Aorta (tissue), 5 donors: ENCODE measurements at regions of chr4 and their contacts with region 1.

Region 1: GRCh38 chr4:87679449-87680169 is 29.5 kb downstream of the DMP1 start:
- DNase-seq: peak; percentile 59 to 82
- ATAC-seq: no peak
- H3K4me3 ChIP-seq: no peak overlapping the region
- H3K27ac ChIP-seq: no peak overlapping the region
- H3K4me1 ChIP-seq: no peaks in the 10 kb centered on the region
- H3K27me3 ChIP-seq: no peaks in the 10 kb centered on the region

Region 2: GRCh38 chr4:87363567-87363966 is 316.0 kb before region 1 on chr4:
- intact Hi-C with region 1: no loop called
- DNase-seq: no peak
- ATAC-seq: no peak
- H3K4me3 ChIP-seq: no peak overlapping the region
- H3K27ac ChIP-seq: no peak overlapping the region
- H3K4me1 ChIP-seq: no peaks in the 10 kb centered on the region
- H3K27me3 ChIP-seq: no peaks in the 10 kb centered on the region

Region 3: DNA sequence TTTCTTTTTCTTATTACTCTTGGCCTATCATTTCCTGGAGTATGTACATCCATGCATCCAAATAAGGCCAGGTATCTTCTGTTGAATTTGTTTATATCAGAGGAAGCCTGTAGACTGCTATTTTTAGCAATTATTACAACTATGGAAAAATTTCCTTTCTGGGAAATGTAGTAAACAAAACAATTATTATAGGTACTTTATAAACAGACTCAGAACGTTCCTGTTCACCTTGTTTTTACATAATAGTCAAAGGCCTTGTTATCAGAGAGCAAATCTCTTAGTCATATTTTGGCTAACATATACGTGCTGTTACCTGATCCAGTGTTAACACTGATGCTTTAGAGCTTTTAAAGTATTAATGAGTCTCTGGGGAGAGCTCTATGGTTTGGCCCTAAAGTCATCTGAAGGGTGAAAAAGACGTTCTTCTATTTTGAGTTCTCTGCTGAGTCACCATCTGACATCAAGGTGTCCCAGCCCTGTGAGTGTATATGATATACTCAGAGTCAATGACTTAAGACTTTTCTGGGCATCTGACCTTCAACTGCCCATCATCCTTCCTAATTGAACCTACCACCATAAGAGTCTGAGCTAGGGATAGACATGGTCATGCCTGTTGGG is 157.7 kb before region 1 on chr4:
- intact Hi-C with region 1: no loop called
- DNase-seq: no peak
- ATAC-seq: peak; percentile 40
- H3K4me3 ChIP-seq: no peak overlapping the region
- H3K27ac ChIP-seq: peak overlapping the region; percentile 90 to 100
- H3K4me1 ChIP-seq: peaks cover 7 to 10% of the 10 kb centered on the region in 2 donors
- H3K27me3 ChIP-seq: no peaks in the 10 kb centered on the region

Region 4: GRCh38 chr4:87543835-87544461 is 135.7 kb before region 1 on chr4:
- intact Hi-C with region 1: loop called in 1 of 2 experiments (anchors 5 kb)
- DNase-seq: no peak
- ATAC-seq: peak; percentile 79
- H3K4me3 ChIP-seq: no peak overlapping the region
- H3K27ac ChIP-seq: no peak overlapping the region
- H3K4me1 ChIP-seq: peaks cover 0 to 4% of the 10 kb centered on the region in 2 donors
- H3K27me3 ChIP-seq: no peaks in the 10 kb centered on the region

Region 5: DNA sequence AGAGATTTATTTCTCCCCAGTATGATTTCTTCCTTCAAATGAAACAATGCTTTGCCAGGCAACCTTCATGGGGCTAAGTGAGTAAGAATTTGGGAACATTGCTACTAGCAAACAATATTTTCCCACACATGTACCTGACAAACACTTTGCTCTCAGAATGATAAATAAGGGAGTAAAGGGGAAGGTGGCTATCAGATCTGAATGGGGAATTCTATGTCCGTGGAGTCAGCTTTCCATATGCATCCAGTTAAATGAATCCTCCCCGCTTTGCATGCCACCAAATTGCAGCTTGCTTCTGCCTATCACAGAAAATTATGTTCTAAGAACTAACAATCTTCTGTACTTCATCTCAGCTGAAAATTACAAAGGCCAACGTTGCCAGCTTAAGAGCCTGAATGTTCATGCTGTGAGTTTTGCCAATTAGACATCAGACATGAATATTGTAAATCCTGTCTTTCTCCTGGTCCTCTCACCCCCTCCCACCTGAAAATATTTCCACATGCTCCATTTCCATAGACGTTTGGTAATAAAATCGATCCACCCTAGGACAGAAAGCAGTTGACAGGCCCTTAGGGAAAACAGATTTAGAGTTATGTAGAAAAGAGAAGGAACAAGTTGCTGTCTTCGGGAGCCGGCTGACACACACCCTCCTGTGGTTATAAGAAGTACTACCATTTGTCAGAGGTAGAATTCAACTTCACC is 159.4 kb after region 1 on chr4:
- intact Hi-C with region 1: loop called in 1 of 2 experiments (anchors 5 kb)
- DNase-seq: no peak
- ATAC-seq: no peak
- H3K4me3 ChIP-seq: no peak overlapping the region
- H3K27ac ChIP-seq: no peak overlapping the region
- H3K4me1 ChIP-seq: peaks cover 0 to 1% of the 10 kb centered on the region in 2 donors
- H3K27me3 ChIP-seq: no peaks in the 10 kb centered on the region

Region 6: DNA sequence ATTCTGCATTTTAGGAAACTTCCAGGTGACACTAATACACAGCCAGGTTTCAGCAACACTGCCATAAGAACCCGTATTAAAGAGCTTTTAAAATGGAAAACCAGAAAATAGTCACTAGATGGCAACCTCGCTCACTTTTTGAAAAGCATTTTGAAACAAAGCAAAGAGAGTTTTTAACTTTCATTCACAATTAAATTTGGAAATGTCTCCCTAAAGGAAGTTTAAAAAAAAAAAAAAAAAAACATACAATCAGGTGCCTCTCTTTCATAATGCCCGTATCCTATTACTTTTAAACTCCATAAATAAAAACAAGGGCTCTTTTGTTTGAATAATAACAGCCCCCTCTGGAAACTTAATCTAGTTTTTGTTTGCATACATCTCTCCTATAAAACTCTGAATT is 173.5 kb after region 1 on chr4:
- intact Hi-C with region 1: no loop called
- DNase-seq: no peak
- ATAC-seq: no peak
- H3K4me3 ChIP-seq: no peak overlapping the region
- H3K27ac ChIP-seq: no peak overlapping the region
- H3K4me1 ChIP-seq: no peaks in the 10 kb centered on the region
- H3K27me3 ChIP-seq: no peaks in the 10 kb centered on the region

Region 7: DNA sequence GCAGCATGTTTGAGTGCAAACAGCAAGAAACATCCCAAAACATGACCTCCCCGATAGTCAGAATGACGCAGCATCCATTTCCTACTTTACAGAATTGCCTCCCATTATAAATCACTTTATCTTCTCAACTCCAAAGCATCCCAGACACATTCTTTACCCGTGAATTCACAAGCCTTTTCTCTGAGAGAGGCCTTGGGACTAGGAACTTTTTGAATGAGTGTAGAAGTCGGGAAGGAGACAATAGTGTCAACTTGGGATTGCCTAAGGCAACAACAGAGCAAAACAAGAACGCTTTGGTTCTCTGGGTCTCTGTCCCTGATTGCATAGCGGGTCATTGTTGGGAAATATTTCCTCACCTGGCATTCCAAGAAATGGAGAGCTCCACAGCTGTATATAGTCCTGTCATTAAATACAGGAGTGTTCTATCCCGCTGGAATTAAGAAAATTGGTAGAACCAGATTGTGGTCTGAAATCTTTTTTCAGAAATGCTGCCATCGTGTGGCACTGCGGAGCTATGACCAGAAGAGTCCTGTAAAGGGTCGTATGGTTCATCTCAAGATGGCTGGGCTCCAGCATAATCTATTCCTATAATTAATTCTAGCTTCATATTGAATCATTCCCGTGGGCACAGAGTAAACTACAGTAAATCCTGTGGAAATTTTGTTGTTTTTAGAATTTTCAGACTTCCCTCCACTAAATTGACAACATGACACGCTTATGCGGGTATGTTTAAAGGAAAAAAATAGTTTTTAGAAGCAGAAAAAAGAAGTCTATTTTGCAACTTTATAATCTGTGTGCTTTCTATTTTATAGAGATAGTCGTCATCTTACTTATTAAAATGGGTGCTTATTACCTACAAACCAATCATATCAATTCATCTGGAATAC is 293.9 kb after region 1 on chr4:
- intact Hi-C with region 1: loop called (anchors 10 kb)
- DNase-seq: peak in 1 of 2 donors; percentile 65
- ATAC-seq: no peak
- H3K4me3 ChIP-seq: no peak overlapping the region
- H3K27ac ChIP-seq: no peak overlapping the region
- H3K4me1 ChIP-seq: no peaks in the 10 kb centered on the region
- H3K27me3 ChIP-seq: peaks cover 0 to 2% of the 10 kb centered on the region in 2 donors